ENCODE measurements at regions of chr14 and their contacts with region 1.

Region 1: GRCh38 chr14:38867561-38868150 is 235.4 kb downstream of the SEC23A start:
- DNase-seq: peak; percentile 80 to 82
- H3K4me3 ChIP-seq: no peak overlapping the region
- H3K27ac ChIP-seq: no peak overlapping the region
- H3K4me1 ChIP-seq: peaks cover 0 to 4% of the 10 kb centered on the region in 2 donors
- H3K27me3 ChIP-seq: no peaks in the 10 kb centered on the region
- CTCF ChIP-seq: peak; percentile 50 to 82 (median 70)
- POLR2A ChIP-seq: no peak

Region 2: DNA sequence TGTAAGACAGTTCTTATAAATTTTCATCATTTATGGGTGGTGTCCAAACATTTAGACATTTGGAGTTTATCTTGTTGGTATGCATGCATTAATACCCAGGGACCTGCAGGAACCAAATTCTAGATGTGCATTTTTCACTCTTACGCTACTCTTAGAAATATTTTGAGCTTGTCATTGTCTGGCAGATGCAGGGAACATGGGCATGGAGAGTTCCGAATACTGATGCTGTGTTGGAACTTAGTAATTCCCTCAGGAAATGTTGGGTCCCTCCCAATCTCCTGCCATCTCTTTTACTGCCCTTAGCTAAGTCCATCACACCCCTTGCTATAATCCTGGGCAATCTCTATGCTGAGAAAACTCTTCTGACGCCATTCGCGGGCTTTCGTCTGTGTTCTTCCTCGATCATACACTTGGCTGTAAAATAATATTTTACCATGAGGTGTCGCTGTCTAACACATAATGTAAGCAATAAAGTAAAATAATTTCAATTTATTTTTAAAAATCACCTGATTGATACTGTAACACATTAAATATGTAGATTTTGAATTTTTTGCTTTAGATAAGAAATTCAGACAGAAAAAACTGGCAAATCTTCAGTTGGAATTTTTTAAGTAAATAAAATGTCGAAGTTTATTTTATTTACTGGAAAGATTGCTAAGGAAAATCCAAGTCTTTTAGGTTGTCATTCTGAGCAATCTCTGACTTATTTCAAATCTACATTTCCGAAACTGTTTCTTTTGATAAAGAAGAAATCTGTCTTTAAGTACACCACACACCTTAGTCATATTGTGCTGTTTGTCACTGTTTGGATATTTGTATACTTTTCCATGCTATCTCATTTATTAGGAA is 964.1 kb before region 1 on chr14:
- intact Hi-C with region 1: loop called (anchors 10 kb)
- DNase-seq: peak in 1 of 2 donors; percentile 5
- H3K4me3 ChIP-seq: no peak overlapping the region
- H3K27ac ChIP-seq: no peak overlapping the region
- H3K4me1 ChIP-seq: no peaks in the 10 kb centered on the region
- H3K27me3 ChIP-seq: no peaks in the 10 kb centered on the region
- CTCF ChIP-seq: peak in 5 of 6 experiments; percentile 20 to 63 (median 56)
- POLR2A ChIP-seq: no peak

Region 3: DNA sequence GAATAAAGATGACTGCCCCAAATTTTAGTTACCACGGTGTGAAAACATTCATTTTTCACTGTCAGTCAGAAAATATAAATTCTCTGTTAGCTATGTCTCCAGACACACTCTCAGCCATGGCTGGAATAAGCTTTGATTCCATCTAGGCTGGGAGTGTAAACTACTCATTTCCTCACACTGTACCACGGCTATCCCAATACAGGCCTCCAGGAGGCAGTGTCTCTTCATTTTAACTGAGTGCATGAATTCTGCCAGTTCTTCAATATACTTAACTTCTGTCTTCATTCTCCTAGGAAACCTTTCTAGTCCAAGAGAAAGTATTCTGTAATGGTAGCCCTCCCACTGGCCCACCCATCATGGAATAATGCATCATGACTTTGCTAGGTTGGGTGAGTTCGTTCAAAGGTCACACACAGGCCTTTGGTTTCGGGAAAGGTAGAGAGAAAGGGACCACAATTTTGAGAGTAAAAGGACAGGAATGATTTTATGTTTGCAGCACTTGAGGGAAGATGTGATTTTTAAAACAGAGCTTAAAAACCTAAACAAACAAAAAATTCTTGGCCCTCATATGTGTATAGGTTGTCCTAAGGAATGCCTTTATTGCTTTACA is 145.7 kb before region 1 on chr14:
- intact Hi-C with region 1: loop called (anchors 5 kb)
- DNase-seq: peak; percentile 71 to 78
- H3K4me3 ChIP-seq: no peak overlapping the region
- H3K27ac ChIP-seq: no peak overlapping the region
- H3K4me1 ChIP-seq: peaks cover 19 to 25% of the 10 kb centered on the region in 2 donors
- H3K27me3 ChIP-seq: no peaks in the 10 kb centered on the region
- CTCF ChIP-seq: peak; percentile 46 to 92 (median 78)
- POLR2A ChIP-seq: no peak

Region 4: GRCh38 chr14:39015360-39015961 is 147.8 kb after region 1 on chr14:
- intact Hi-C with region 1: loop called (anchors 10 kb)
- DNase-seq: peak; percentile 19 to 33
- H3K4me3 ChIP-seq: no peak overlapping the region
- H3K27ac ChIP-seq: no peak overlapping the region
- H3K4me1 ChIP-seq: no peaks in the 10 kb centered on the region
- H3K27me3 ChIP-seq: no peaks in the 10 kb centered on the region
- CTCF ChIP-seq: peak; percentile 49 to 86 (median 60)
- POLR2A ChIP-seq: no peak